ENCODE measurements at regions of chr18 and their contacts with region 1.

Region 1: GRCh38 chr18:76709659-76710645 is 112.4 kb upstream of the ZNF236 start:
- DNase-seq: peak; percentile 72
- H3K4me3 Mint-ChIP-seq: no peak overlapping the region
- H3K27ac Mint-ChIP-seq: no peak overlapping the region
- H3K4me1 Mint-ChIP-seq: peaks cover 11% of the 10 kb centered on the region
- H3K27me3 Mint-ChIP-seq: peaks cover 38% of the 10 kb centered on the region

Region 2: DNA sequence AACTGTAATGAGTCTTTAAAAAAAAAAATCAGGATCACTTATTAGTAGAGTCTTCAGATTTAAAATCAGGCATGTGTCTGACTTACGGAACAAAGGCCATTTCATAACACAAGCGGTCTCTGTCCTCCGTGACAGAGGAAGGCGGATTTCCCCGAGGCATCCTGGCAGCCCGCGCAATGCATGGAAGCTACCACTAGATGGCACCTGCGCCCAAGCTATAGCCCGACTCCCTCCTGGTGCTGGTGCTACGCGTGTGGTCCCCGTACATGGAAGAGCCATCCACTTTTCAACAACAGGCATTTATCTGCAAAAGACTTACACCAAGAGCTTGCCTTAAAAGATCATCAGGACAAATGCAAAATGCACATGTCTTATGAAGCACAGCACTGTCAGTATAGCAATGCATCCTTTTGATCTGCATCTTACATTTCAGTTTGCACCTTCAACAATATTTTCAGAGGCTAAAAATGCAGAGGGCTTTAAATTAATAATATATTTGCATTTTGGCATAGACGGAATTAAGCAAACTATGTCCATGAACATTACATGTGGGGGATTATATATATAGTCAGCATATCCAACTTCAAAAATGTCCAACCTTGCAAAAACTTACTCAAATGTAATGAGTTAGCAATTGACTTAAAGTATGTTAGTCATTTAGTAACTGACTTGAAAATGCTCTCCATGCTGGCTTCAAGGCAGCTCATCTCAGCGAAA is 310.9 kb before region 1 on chr18:
- CTCF ChIA-PET with region 1: interaction called, 83 read pairs
- DNase-seq: peak; percentile 81
- H3K4me3 Mint-ChIP-seq: no peak overlapping the region
- H3K27ac Mint-ChIP-seq: no peak overlapping the region
- H3K4me1 Mint-ChIP-seq: peaks cover 4% of the 10 kb centered on the region
- H3K27me3 Mint-ChIP-seq: peaks cover 19% of the 10 kb centered on the region

Region 3: GRCh38 chr18:76588601-76589226 is 121.2 kb before region 1 on chr18:
- CTCF ChIA-PET with region 1: no interaction called
- DNase-seq: no peak
- H3K4me3 Mint-ChIP-seq: no peak overlapping the region
- H3K27ac Mint-ChIP-seq: no peak overlapping the region
- H3K4me1 Mint-ChIP-seq: peaks cover 4% of the 10 kb centered on the region
- H3K27me3 Mint-ChIP-seq: peaks cover 46% of the 10 kb centered on the region

Region 4: DNA sequence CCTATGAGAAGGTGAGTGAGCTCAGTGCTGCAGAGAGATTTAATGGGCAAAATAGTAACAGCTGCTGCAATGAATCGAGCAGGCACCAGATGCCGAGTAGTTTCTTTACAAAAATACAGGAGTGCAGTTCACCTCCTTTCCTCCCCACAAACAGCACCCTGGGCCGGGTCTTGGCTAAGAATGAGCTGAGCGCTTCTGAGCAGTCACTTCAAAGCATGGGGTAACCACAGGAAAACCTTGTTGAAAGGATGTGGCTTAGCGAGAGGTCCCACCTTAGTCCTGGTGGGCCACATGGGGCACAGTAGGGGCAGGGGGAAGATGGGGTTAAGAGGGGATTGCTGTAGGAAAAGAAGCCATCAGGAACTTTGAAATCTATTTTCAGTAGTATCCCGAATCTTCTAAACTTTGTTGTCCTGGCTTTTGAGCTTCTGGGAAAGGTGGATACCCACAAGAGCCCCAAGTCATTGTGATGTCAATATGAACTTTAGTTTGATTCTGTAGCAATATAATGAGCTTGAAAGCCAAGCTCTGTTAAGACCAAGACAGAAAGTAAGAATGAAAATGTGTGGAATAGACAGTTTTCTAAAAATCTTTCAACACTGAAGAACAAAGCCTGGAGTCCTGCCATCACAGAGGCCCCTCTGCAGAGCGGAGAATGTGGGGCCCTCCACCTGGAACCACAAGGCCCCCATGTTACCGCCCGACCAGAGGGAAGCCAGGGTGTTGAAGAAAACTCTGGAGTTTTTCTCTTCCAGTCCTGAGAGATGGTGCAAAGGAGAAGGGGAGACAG is 11.4 kb after region 1 on chr18:
- CTCF ChIA-PET with region 1: interaction called, 18 read pairs
- DNase-seq: peak; percentile 89
- H3K4me3 Mint-ChIP-seq: peak overlapping the region; percentile 60
- H3K27ac Mint-ChIP-seq: peak overlapping the region; percentile 93
- H3K4me1 Mint-ChIP-seq: peaks cover 60% of the 10 kb centered on the region
- H3K27me3 Mint-ChIP-seq: peaks cover 31% of the 10 kb centered on the region

Region 5: GRCh38 chr18:76736309-76736708 is 26.4 kb after region 1 on chr18:
- CTCF ChIA-PET with region 1: no interaction called
- DNase-seq: no peak
- H3K4me3 Mint-ChIP-seq: no peak overlapping the region
- H3K27ac Mint-ChIP-seq: no peak overlapping the region
- H3K4me1 Mint-ChIP-seq: peaks cover 15% of the 10 kb centered on the region
- H3K27me3 Mint-ChIP-seq: peaks cover 57% of the 10 kb centered on the region